ENCODE measurements at regions of chr5 and their contacts with region 1.

Region 1: DNA sequence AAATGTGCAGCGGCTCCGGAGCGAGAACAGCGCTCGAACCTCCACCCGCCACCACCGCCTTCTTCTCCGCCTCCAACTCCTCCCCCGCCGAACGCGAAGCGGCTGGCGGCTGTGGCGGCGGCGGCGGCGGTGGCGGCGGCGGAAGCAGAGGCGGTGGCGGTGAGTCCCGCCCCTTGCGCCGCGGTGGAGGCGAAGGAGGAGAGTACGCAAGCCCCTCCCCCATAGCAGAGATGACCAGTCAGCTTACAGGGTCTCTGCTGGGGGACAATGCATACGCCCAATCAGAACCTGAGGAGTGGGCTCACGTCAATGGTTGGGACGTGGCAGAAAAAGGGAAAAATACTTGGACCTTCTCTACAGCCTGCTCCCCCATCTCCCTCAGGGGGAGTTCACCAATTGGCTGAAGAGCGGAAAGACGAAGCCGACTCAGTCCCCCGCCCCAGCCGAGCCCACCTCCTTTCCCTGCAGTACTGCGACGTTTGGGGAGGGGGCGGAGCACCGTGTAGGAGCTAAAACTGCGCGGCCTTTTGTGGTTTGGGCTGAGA is at the start of gene PJA2:
- DNase-seq: peak; percentile 99
- H3K4me3 ChIP-seq: peak within 1 kb of the TSS; percentile 94
- H3K27ac ChIP-seq: peak within 1 kb of the TSS; percentile 94
- H3K4me1 ChIP-seq: peaks cover 28% of the 10 kb centered on the region
- CTCF ChIP-seq: no peak
- total RNA-seq, gene PJA2: 41.3 and 47.9 TPM in 2 replicates

Region 2: DNA sequence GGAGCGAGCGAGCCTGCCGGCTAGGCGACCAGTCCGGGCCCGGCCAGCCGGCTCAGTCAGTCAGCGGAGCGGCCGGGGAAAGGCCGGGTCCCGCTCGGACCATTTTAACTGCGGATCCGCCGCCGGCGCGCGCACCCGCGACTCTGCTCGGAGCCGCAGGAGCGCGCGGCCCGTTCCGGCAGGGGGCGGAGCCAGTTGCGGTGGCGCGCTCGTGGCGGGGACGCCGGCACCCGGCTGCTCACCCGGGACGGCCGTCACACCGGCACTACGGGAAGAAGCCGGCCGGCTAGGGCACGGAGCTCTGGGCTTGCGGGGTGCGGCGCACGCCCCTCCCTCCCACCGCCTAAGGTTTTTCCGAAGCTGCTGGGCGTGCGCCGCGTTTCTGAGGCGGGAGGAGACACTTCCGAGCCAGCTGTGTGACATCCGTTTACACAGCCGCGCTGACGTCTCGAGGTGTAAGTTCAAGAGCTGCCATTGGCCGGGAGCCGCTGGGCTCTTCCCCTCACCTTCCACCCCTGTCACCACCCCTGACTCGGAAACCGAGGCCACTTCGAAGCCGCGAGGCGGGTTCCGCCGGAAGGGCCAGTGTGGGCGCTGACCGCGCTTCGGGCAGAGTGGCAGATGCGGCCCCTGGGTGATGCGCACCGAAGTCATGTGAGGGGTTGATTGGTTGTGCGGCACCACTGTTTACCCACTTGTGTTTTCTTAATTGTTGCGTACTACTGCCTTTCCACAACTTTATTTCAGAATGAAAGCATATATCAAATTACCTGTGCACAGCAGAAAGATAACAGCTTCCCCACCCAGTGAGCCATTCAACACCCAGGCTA is 1027.7 kb before region 1 on chr5 and contains the start of gene FBXL17:
- CTCF ChIA-PET with region 1: interaction called, 3 read pairs
- POLR2A ChIA-PET with region 1: no interaction called
- intact Hi-C with region 1: loop called (anchors 5 kb)
- DNase-seq: peak; percentile 96
- H3K4me3 ChIP-seq: peak within 1 kb of the TSS; percentile 92
- H3K27ac ChIP-seq: peak within 1 kb of the TSS; percentile 92
- H3K4me1 ChIP-seq: peaks cover 28% of the 10 kb centered on the region
- CTCF ChIP-seq: no peak
- total RNA-seq, gene FBXL17: 10.2 TPM in 2 replicates

Region 3: GRCh38 chr5:108748401-108749127 is 661.4 kb before region 1 on chr5:
- CTCF ChIA-PET with region 1: no interaction called
- POLR2A ChIA-PET with region 1: no interaction called
- intact Hi-C with region 1: loop called (anchors 1 kb)
- DNase-seq: peak; percentile 96
- H3K4me3 ChIP-seq: peak overlapping the region; percentile 81
- H3K27ac ChIP-seq: no peak overlapping the region
- H3K4me1 ChIP-seq: peaks cover 6% of the 10 kb centered on the region
- CTCF ChIP-seq: peak; percentile 56

Region 4: GRCh38 chr5:109281136-109281790 is 128.7 kb before region 1 on chr5:
- CTCF ChIA-PET with region 1: no interaction called
- POLR2A ChIA-PET with region 1: no interaction called
- intact Hi-C with region 1: no loop called
- DNase-seq: no peak
- H3K4me3 ChIP-seq: no peak overlapping the region
- H3K27ac ChIP-seq: no peak overlapping the region
- H3K4me1 ChIP-seq: no peaks in the 10 kb centered on the region
- CTCF ChIP-seq: no peak

Region 5: GRCh38 chr5:109682383-109682782 is 272.5 kb after region 1 on chr5:
- CTCF ChIA-PET with region 1: no interaction called
- POLR2A ChIA-PET with region 1: no interaction called
- intact Hi-C with region 1: no loop called
- DNase-seq: no peak
- H3K4me3 ChIP-seq: no peak overlapping the region
- H3K27ac ChIP-seq: no peak overlapping the region
- H3K4me1 ChIP-seq: no peaks in the 10 kb centered on the region
- CTCF ChIP-seq: no peak

Region 6: GRCh38 chr5:109921735-109922380 is 511.9 kb after region 1 on chr5:
- CTCF ChIA-PET with region 1: no interaction called
- POLR2A ChIA-PET with region 1: no interaction called
- intact Hi-C with region 1: loop called (anchors 10 kb)
- DNase-seq: peak; percentile 93
- H3K4me3 ChIP-seq: peak overlapping the region; percentile 7
- H3K27ac ChIP-seq: peak overlapping the region; percentile 92
- H3K4me1 ChIP-seq: peaks cover 34% of the 10 kb centered on the region
- CTCF ChIP-seq: peak; percentile 28; the same call in 1 of the 2 replicates

Region 7: GRCh38 chr5:110738812-110739651 is 1329.1 kb after region 1 on chr5 and contains the start of gene SLC25A46:
- CTCF ChIA-PET with region 1: no interaction called
- POLR2A ChIA-PET with region 1: no interaction called
- intact Hi-C with region 1: loop called (anchors 5 kb)
- DNase-seq: peak; percentile 92
- H3K4me3 ChIP-seq: peak within 1 kb of the TSS; percentile 94
- H3K27ac ChIP-seq: peak within 1 kb of the TSS; percentile 66
- H3K4me1 ChIP-seq: peaks cover 16% of the 10 kb centered on the region
- CTCF ChIP-seq: no peak
- total RNA-seq, gene SLC25A46: 36.4 and 37.8 TPM in 2 replicates